Cardiac septum (tissue), 1 donor: ENCODE measurements at regions of chr20 and their contacts with region 1.

Region 1: DNA sequence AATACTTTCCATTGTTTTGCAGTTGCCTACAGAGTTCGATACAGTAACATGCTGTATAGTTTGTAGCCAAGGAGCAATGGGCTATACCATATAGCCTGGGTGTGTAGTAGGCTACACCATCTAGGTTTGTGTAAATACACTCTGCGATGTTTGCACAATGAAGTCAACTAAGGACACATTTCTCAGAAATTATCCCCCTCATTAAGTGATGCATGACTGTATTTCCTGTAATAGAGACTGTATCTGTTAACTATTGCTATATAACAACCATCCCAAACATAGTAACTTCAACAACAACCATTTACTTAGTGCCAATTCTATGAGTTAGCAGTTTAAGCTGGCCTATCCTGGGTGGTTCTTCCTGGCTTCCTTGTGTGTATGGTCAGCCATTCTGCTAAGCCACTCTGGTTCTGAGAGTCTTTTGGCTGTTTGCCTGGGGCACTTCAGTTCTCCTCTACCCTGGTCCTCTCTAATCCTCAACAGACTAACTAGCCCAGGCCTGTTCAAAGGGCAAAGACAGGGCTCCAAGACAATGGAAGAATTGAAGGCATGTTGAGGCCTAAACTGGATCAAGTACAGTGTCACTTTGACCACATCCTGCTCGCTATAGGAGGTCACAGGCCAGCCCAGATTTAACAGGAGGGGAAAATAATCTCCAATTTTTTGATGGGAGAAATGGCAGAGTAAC is 124.0 kb downstream of the PLCB1 start:
- DNase-seq: no peak

Region 2: DNA sequence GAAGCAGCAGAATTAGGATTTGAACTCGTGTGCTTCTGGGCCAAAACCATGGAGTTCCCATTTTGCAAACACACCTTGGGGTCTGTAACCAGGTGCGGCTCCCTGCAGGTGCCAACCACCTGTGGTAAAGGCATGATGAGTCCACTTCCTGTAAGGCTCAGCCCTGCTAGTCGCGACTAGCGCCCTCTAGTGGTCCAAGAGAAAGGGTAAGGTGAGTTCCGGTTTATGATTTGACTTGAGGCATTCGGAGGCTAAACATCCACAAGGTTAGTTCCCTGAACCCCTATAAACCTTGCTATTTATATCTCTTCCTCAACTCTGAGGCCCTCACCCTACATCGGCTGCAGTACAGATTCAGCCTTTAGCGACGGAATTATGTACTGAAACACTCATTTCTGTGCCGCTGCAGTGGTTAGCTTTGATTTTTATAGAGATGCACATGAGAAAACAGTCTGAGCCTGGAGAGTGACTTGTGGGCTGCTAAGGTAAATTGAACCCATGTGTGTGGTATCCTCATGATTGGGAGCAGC is 49.4 kb after region 1 on chr20:
- intact Hi-C with region 1: loop called (anchors 10 kb)
- DNase-seq: peak; percentile 79